Kidney (tissue), 22 donors: ENCODE measurements at regions of chr16 and their contacts with region 1.

Region 1: GRCh38 chr16:69754469-69755310 is at the start of gene NOB1:
- DNase-seq: peak; percentile 97 to 99 (median 98)
- H3K4me3 ChIP-seq: peak within 1 kb of the TSS; percentile 89 to 98 (median 93)
- H3K27ac ChIP-seq: peak within 1 kb of the TSS; percentile 29 to 51
- H3K4me1 ChIP-seq: peaks cover 0 to 5% (median 4%) of the 10 kb centered on the region in 3 donors
- H3K27me3 ChIP-seq: no peaks in the 10 kb centered on the region
- CTCF ChIP-seq: peak; percentile 99
- total RNA-seq, gene NOB1: 50.4 TPM

Region 2: GRCh38 chr16:69709456-69710084 is 45.1 kb before region 1 on chr16:
- intact Hi-C with region 1: loop called (anchors 10 kb)
- DNase-seq: peak in 2 of 5 donors; percentile 78 to 84
- H3K4me3 ChIP-seq: no peak overlapping the region
- H3K27ac ChIP-seq: peak overlapping the region in 1 of 2 donors; percentile 44
- H3K4me1 ChIP-seq: peaks cover 0 to 13% (median 5%) of the 10 kb centered on the region in 3 donors
- H3K27me3 ChIP-seq: no peaks in the 10 kb centered on the region
- CTCF ChIP-seq: peak; percentile 73

Region 3: GRCh38 chr16:69823831-69824563 is 69.3 kb after region 1 on chr16:
- intact Hi-C with region 1: no loop called
- DNase-seq: peak in 2 of 5 donors; percentile 29 to 71
- H3K4me3 ChIP-seq: peak overlapping the region in 1 of 3 donors; percentile 30
- H3K27ac ChIP-seq: peak overlapping the region; percentile 58 to 62
- H3K4me1 ChIP-seq: peaks cover 0 to 5% (median 0%) of the 10 kb centered on the region in 3 donors
- H3K27me3 ChIP-seq: no peaks in the 10 kb centered on the region
- CTCF ChIP-seq: no peak